MCF 10A (cell line): ENCODE measurements at regions of chr1 and their contacts with region 1.

Region 1: GRCh38 chr1:112715264-112716053 is at the start of gene PPM1J:
- DNase-seq: peak; percentile 96
- H3K4me3 Mint-ChIP-seq: peak within 1 kb of the TSS; percentile 75
- H3K27ac Mint-ChIP-seq: no peak within 1 kb of the TSS
- H3K4me1 Mint-ChIP-seq: peaks cover 5% of the 10 kb centered on the region
- H3K27me3 Mint-ChIP-seq: no peaks in the 10 kb centered on the region
- CTCF ChIP-seq: no peak
- total RNA-seq, gene PPM1J: 0.88 and 1.5 TPM in 2 replicates

Region 2: DNA sequence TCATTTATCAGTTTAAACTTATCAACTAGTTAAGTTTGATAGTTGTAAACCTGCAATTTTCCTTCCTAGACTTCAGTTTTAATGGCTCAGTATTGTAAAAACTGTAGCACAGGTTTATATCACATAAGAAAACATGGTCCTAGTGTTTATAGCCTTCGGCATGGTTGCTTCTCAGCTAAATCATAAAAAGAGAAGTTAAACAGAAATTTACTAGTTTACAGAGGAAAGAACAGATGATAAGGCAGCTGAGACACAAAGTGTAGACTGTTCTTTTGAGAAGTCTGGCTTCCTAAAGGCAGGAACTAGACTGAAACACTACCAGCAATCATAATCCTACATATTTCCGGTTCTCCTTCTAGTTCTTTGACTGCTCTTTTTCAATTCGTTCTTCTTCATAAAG is 166.9 kb before region 1 on chr1:
- CTCF ChIA-PET with region 1: no interaction called
- POLR2A ChIA-PET with region 1: no interaction called
- intact Hi-C with region 1: no loop called
- DNase-seq: no peak
- H3K4me3 Mint-ChIP-seq: no peak overlapping the region
- H3K27ac Mint-ChIP-seq: no peak overlapping the region
- H3K4me1 Mint-ChIP-seq: peaks cover 16% of the 10 kb centered on the region
- H3K27me3 Mint-ChIP-seq: no peaks in the 10 kb centered on the region
- CTCF ChIP-seq: no peak

Region 3: DNA sequence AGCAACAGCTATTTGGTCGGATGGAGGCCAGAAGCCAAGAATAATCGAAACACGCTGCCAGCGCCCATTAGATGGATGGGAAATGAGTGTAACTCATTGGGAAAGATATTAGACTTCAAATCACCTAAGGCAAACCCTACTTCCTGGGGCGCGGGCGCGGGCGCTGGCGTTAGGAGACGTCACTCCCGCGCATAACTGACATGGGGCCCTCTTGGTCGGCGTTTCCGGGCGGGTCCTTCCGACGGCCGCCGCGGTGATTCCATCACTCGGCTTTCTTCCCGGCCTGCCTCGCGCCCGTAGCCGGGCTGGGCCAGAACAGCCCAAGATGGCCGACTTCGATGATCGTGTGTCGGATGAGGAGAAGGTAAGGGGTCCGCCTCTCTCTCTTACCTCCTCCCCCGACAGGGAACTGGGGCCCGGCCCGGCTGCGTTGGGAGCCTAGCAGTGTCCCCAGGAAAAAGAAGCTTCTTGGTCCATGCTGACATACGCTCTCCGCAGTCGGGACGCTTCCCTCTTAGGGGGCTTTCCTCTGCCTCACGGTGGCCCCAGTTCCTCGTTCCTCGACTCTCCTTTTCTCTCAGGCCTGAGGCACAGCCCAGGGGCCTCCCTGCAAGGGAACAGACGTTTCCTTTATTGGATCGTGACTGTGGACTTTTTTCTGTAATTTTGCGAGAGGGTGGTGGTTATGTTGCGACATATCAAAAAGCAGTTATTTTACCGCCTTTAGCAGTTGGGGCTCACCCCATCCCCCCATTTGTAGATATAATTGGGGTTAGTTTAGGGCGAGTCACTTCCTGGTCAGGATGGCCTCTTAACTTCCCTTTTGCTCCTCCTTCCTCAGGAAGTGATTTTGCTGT is 95.7 kb before region 1 on chr1 and contains the start of gene CAPZA1:
- CTCF ChIA-PET with region 1: interaction called, 3 read pairs
- POLR2A ChIA-PET with region 1: interaction called, 31 read pairs
- intact Hi-C with region 1: no loop called
- DNase-seq: peak; percentile 94
- H3K4me3 Mint-ChIP-seq: peak within 1 kb of the TSS; percentile 97
- H3K27ac Mint-ChIP-seq: peak within 1 kb of the TSS; percentile 95
- H3K4me1 Mint-ChIP-seq: peaks cover 12% of the 10 kb centered on the region
- H3K27me3 Mint-ChIP-seq: no peaks in the 10 kb centered on the region
- CTCF ChIP-seq: no peak
- total RNA-seq, gene CAPZA1: 150 and 174 TPM in 2 replicates

Region 4: DNA sequence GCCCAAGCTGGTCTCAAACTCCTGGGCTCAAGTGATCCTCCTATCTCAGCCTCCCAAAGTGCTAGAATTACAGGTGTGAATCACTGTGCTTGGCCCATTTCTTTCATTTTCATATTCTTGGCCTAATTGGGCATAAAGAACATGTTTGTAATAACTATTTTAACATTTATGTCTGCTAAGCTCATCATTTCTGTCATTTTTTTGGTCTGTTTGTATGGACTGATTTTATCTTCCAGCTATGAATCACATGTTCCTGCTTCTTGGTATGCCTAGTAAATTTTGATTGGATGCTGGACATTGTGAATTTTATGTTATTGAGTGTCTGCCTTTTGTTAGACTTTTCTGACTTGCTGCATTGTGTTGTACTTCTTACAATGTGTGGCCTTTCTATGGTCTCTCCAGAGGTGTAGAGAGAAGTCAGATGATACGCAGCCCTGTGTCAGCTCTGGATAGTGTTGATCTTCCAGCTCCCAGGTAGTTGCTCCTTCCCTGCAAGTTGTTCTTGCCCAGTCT is 38.7 kb after region 1 on chr1:
- CTCF ChIA-PET with region 1: interaction called, 12 read pairs
- POLR2A ChIA-PET with region 1: no interaction called
- intact Hi-C with region 1: no loop called
- DNase-seq: no peak
- H3K4me3 Mint-ChIP-seq: no peak overlapping the region
- H3K27ac Mint-ChIP-seq: no peak overlapping the region
- H3K4me1 Mint-ChIP-seq: peaks cover 3% of the 10 kb centered on the region
- H3K27me3 Mint-ChIP-seq: peaks cover 11% of the 10 kb centered on the region
- CTCF ChIP-seq: no peak

Region 5: GRCh38 chr1:112788561-112788960 is 73.1 kb after region 1 on chr1:
- CTCF ChIA-PET with region 1: interaction called, 70 read pairs
- POLR2A ChIA-PET with region 1: no interaction called
- intact Hi-C with region 1: no loop called
- DNase-seq: peak; percentile 19
- H3K4me3 Mint-ChIP-seq: no peak overlapping the region
- H3K27ac Mint-ChIP-seq: no peak overlapping the region
- H3K4me1 Mint-ChIP-seq: no peaks in the 10 kb centered on the region
- H3K27me3 Mint-ChIP-seq: no peaks in the 10 kb centered on the region
- CTCF ChIP-seq: no peak

Region 6: GRCh38 chr1:112809253-112809684 is 93.8 kb after region 1 on chr1:
- CTCF ChIA-PET with region 1: interaction called, 838 read pairs
- POLR2A ChIA-PET with region 1: interaction called, 32 read pairs
- intact Hi-C with region 1: loop called (anchors 1 kb)
- DNase-seq: peak; percentile 80
- H3K4me3 Mint-ChIP-seq: no peak overlapping the region
- H3K27ac Mint-ChIP-seq: no peak overlapping the region
- H3K4me1 Mint-ChIP-seq: peaks cover 5% of the 10 kb centered on the region
- H3K27me3 Mint-ChIP-seq: no peaks in the 10 kb centered on the region
- CTCF ChIP-seq: peak; percentile 82

Region 7: DNA sequence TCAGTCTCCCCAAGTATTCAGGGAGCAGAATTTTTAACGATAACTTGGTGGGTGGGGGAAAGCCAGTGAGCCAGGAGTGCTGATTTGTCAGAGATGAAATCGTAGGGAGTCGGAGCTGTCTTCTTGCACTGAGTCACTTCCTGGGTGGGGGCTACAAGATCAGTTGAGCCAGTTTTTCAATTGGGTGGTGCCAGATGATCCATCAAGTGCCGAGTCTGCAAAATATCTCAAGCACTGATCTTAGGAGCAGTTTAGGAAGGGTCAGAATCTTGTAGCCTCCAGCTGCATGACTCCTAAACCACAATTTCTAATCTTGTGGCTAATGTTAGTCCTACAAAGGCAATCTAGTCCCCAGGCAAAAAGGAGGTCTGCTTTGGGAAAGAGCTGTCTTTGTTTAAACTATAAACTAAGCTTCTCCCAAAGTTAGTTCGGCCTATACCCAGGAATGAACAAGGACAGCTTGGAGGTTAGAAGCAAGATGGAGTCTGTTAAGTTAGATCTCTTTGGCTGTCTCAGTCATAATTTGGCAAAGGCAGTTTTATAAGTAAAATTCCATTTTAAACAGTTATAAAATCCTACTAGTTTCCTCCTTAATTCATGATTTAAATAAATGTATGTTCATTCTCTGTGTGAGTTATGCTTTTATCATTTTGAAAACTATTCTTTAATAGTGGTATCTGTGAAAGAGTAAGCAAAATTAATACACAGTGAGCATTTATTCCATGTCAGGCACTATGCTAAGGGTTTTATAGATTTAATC is 188.8 kb after region 1 on chr1:
- CTCF ChIA-PET with region 1: interaction called, 8 read pairs
- POLR2A ChIA-PET with region 1: interaction called, 11 read pairs
- intact Hi-C with region 1: no loop called
- DNase-seq: peak; percentile 89
- H3K4me3 Mint-ChIP-seq: peak overlapping the region; percentile 24
- H3K27ac Mint-ChIP-seq: peak overlapping the region; percentile 92
- H3K4me1 Mint-ChIP-seq: peaks cover 35% of the 10 kb centered on the region
- H3K27me3 Mint-ChIP-seq: no peaks in the 10 kb centered on the region
- CTCF ChIP-seq: no peak

Region 8: DNA sequence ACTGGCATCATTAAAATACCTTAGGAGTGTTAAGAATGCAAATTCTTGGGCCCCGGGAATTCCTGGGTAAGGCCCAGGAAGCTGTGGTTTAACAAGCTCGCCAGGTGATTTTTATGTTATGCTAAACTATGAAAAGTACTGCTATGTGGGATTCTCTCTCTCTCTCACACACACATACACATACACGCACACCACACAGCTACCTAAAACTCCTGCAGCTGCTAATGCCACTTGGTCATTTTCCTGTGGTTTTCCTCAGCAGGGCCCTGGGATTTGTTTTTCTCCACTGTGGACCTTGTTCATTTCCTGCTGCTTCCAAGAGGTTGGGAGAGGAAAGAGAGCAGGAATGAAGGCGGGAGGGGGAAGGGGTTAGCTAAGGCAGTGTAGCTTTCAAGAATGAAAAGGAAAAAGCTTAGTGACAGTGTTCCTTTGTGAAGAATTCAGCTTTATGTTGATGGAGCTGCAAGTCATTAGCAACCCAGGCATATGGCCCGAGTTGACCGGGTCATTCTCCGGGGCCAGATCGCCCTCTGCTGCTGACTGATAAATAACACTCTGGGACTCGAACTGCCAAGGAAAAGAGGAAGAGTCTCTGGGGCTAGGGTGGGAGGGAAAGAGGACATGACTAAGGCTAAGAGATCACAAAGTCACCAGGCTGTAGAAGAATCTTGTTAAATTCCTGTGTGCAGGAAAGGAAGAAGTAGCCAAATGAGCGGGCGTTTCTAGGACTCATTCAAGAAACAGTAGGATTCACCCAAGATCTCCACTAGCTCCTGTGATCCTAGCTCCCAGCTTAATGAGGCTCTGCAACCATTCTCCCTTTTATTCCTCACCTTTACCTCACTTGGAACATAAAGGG is 327.1 kb after region 1 on chr1:
- CTCF ChIA-PET with region 1: interaction called, 41 read pairs
- POLR2A ChIA-PET with region 1: interaction called, 6 read pairs
- intact Hi-C with region 1: loop called (anchors 1 kb)
- DNase-seq: peak; percentile 85
- H3K4me3 Mint-ChIP-seq: no peak overlapping the region
- H3K27ac Mint-ChIP-seq: no peak overlapping the region
- H3K4me1 Mint-ChIP-seq: peaks cover 14% of the 10 kb centered on the region
- H3K27me3 Mint-ChIP-seq: no peaks in the 10 kb centered on the region
- CTCF ChIP-seq: peak; percentile 64